ENCODE measurements at regions of chrX and their contacts with region 1.

Region 1: DNA sequence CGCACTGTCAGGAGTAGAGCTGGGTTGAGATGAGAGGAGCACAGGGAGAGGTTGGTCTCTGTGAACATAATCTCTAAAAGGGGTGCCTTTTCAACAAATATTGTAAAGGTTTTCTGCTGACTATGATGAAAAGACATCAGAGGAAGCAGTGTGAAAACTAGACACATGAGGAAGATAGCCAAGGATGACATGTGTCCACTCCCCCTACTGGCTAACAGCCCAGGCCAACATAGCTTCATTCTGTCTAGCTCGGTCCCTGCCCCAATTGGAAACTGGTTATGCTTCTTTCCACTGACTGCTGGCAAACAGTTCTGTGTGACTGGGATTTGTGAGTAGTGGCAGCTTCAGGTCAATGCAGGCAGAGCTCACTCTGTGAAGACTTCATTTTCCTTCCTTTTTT is 115.4 kb upstream of the ESX1 start:
- DNase-seq: peak; percentile 46
- H3K4me3 Mint-ChIP-seq: no peak overlapping the region
- H3K27ac Mint-ChIP-seq: no peak overlapping the region
- H3K4me1 Mint-ChIP-seq: no peaks in the 10 kb centered on the region
- H3K27me3 Mint-ChIP-seq: peaks cover 62% of the 10 kb centered on the region
- CTCF ChIP-seq: no peak

Region 2: DNA sequence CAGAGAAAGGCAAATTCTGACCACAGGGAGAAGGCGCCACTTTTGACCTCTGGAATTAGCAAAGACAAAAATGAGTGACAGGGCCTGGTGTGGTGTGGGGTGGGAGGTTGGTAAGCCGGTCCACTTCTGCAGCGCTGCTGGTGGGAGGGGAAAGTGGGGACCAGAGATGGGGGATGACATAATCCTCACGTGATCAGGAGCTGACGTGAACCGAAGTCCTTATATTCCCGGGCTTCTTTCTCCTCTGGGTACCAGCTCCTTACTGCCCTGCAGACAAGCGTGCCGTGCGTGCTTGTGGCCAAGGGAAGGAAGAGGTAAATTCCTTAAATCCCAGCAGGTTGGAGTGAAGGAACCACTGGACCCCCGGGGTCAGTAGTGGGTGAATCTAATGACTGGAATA is 1040.1 kb before region 1 on chrX and contains the start of gene TCEAL7:
- CTCF ChIA-PET with region 1: no interaction called
- POLR2A ChIA-PET with region 1: no interaction called
- intact Hi-C with region 1: no loop called
- DNase-seq: no peak
- H3K4me3 Mint-ChIP-seq: no peak within 1 kb of the TSS
- H3K27ac Mint-ChIP-seq: no peak within 1 kb of the TSS
- H3K4me1 Mint-ChIP-seq: no peaks in the 10 kb centered on the region
- H3K27me3 Mint-ChIP-seq: peaks cover 81% of the 10 kb centered on the region
- CTCF ChIP-seq: no peak
- total RNA-seq, gene TCEAL7: not detected in 2 replicates

Region 3: DNA sequence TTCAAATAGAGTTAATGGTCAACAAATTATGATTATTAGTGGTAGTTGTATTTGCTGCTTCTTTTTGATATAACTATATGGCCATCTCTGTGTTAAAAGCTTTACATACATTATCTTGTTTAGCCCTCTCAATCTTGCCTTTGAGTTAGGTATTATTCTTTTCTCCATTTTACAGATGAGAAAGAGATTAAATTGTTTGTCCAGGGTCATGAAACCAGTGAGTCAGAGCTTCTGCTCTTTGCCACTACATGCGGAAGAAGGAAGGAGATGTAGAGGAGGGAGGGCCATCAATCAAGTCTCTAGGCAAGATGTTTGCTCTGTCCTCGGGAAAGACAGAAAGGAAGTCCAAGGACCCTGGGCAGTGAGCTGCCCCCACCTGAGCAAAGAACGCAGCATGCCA is 62.2 kb after region 1 on chrX:
- CTCF ChIA-PET with region 1: no interaction called
- POLR2A ChIA-PET with region 1: no interaction called
- intact Hi-C with region 1: loop called (anchors 10 kb)
- DNase-seq: no peak
- H3K4me3 Mint-ChIP-seq: no peak overlapping the region
- H3K27ac Mint-ChIP-seq: no peak overlapping the region
- H3K4me1 Mint-ChIP-seq: peaks cover 6% of the 10 kb centered on the region
- H3K27me3 Mint-ChIP-seq: peaks cover 79% of the 10 kb centered on the region
- CTCF ChIP-seq: no peak

Measured in MCF 10A (cell line).